HCT116 (cell line): ENCODE measurements at regions of chr1 and their contacts with region 1.

Region 1: DNA sequence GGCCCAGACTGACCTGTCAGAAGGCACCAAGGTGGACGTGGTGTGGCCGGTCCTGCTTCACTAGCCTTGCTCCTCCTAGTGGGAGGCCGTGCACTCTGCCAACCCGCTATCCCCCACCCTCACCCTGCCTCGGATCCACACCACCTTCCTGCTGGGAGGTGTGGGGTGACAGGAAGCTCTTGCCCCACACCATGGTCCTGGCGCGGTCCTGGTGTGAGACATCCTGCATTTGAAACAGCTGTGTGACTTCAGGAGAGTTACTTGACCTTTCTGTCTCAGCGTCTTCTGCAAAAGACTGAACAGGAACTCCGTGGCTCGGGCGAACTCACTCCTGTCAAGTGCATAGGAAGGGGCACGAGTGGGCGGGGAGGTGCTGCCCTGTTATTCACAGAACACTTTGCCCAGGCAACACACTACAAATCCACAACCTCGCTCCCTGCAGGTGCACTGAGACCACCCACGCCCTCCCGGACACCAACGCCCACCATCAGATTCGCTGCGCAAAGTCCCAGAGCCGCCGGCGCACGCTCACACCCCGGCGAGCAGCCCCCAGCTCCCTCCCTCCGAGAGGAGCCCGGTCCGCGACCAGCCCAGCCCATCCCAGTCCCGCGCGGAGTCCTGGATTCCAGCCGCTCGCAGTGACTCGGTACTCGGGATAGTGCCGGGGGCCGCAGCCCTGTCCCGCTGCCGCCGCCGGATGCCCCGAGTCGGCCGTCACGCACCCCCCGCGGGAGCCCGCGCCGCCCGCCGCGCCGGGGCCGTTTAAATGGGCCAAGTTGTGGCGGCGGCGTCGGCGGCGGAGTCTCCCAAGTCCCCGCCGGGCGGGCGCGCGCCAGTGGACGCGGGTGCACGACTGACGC is at the start of gene SAMD11:
- DNase-seq: peak; percentile 54
- ATAC-seq: peak; percentile 39
- H3K4me3 ChIP-seq: peak within 1 kb of the TSS; percentile 43 to 61
- H3K27ac ChIP-seq: peak within 1 kb of the TSS; percentile 74; the same call in 1 of the 2 replicates
- H3K4me1 ChIP-seq: peaks cover 37 to 49% of the 10 kb centered on the region in 2 experiments
- H3K27me3 ChIP-seq: peaks cover 32% of the 10 kb centered on the region; the same call in 1 of the 2 replicates
- CTCF ChIP-seq: no peak
- POLR2A ChIP-seq: no peak
- RAD21 ChIP-seq: no peak
- total RNA-seq, gene SAMD11: 11.5 TPM

Region 2: DNA sequence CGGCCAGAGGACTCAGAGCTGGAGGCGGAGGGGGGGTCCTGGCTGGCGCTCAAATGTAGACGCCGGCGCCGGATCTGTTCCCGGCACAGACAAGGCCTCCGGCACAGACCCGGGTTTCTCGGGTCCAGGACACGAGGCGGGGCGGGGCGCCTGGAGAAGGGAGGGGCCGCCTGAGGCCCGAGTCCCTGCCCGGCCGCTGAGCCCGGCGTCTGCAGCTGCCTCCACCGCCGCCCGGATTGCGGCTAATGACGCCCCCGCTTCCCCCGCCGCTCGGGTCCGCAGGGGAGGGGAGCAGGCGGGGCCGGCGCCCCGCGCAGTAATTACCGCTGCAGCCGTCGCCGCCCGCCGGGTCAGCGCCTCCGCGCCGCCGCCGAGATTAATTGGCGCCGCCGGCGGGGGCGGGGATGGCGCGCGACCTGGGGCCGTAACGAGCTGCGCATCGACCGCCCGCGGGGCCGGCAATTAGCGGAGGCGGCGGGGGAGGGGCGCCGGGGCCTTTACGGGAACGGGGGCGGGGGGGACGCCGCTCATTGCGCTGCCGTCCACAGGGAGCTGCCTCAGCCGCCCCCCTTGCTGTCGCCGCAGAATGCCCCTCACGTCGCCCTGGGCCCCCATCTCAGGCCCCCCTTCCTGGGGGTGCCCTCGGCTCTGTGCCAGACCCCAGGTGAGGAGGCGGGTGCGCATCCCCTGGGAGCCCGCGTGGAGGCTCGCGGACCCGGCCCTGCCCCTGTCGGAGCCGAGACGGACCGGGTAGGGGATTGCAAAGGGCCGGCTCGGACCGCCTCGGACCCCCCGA is 18.4 kb after region 1 on chr1:
- CTCF ChIA-PET with region 1: interaction called, 3 read pairs
- POLR2A ChIA-PET with region 1: no interaction called
- RAD21 ChIA-PET with region 1: interaction called, 3 to 6 read pairs
- intact Hi-C with region 1: loop called (anchors 2 kb)
- DNase-seq: no peak
- ATAC-seq: peak; percentile 60
- H3K4me3 ChIP-seq: peak overlapping the region; percentile 38 to 50
- H3K27ac ChIP-seq: peak overlapping the region; percentile 58; the same call in 1 of the 2 replicates
- H3K4me1 ChIP-seq: peaks cover 49 to 62% of the 10 kb centered on the region in 2 experiments
- H3K27me3 ChIP-seq: peaks cover 10% of the 10 kb centered on the region; the same call in 1 of the 2 replicates
- CTCF ChIP-seq: no peak
- POLR2A ChIP-seq: no peak
- RAD21 ChIP-seq: no peak